PC-3 (cell line): ENCODE measurements at regions of chr14 and their contacts with region 1.

Region 1: DNA sequence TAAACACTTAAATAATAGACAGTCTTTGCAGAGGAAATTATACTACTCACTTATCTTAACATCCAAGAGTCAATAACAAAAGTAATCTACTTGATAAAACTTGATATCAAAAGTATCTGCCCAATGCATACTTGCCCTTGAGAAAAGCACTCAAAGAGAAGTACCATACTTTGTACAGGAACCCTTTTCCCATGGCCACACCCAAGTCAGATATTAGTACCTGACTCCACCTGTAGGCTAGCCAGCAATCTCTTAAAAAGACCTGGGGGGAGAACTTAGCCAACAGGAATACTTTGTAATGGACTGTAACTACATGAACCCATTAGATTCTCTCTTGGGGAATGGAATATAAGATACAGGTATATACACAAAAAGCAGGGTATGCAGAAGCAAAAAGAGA is 99.6 kb upstream of the HECTD1 start:
- DNase-seq: peak; percentile 46
- ATAC-seq: no peak
- H3K4me3 ChIP-seq: no peak overlapping the region
- H3K27ac ChIP-seq: no peak overlapping the region
- H3K4me1 ChIP-seq: no peaks in the 10 kb centered on the region
- H3K27me3 ChIP-seq: no peaks in the 10 kb centered on the region
- CTCF ChIP-seq: peak; percentile 39; the same call in 1 of the 2 replicates

Region 2: GRCh38 chr14:31320216-31320615 is 13.0 kb after region 1 on chr14:
- CTCF ChIA-PET with region 1: no interaction called
- POLR2A ChIA-PET with region 1: interaction called, 10 read pairs
- intact Hi-C with region 1: no loop called
- DNase-seq: no peak
- ATAC-seq: no peak
- H3K4me3 ChIP-seq: no peak overlapping the region
- H3K27ac ChIP-seq: no peak overlapping the region
- H3K4me1 ChIP-seq: no peaks in the 10 kb centered on the region
- H3K27me3 ChIP-seq: no peaks in the 10 kb centered on the region
- CTCF ChIP-seq: no peak